ENCODE measurements at regions of chr12 and their contacts with region 1.

Region 1: DNA sequence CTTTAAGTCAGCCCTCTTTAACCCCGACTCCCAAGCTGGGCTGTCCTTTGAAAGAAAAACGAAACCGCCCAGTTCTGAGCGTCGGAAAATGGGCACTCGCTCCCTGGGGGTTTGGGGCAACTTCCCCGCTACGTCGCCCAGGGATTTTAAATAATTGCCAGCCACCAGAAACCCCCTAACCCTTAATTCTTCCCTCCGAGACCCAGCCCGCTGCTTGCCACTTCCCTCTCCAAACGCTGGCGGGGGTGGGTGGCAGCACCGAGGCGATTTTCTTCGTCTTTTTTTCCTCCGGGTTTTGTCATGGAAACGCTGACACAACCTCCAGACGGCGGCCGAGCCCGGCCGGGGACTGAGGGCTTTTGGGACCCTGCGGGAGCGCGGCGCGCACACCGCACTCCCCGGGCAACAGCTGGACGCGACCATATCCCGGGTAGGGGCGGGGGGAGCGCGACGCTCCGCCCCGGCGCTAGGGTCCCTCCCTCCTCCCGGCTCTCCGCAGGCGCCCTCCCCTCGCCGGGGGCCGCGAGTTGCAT is at the start of gene CHST11:
- DNase-seq: peak; percentile 84
- ATAC-seq: peak; percentile 75
- H3K4me3 ChIP-seq: peak within 1 kb of the TSS; percentile 76 to 99 (median 97)
- H3K4me3 Mint-ChIP-seq: peak within 1 kb of the TSS; percentile 98
- H3K27ac ChIP-seq: peak within 1 kb of the TSS; percentile 71 to 92
- H3K27ac Mint-ChIP-seq: peak within 1 kb of the TSS; percentile 94
- H3K4me1 ChIP-seq: peaks cover 28 to 36% of the 10 kb centered on the region in 2 donors
- H3K4me1 Mint-ChIP-seq: peaks cover 47% of the 10 kb centered on the region
- H3K27me3 ChIP-seq: no peaks in the 10 kb centered on the region
- H3K27me3 Mint-ChIP-seq: no peaks in the 10 kb centered on the region
- CTCF ChIP-seq: peak; percentile 28
- total RNA-seq, gene CHST11: 135 and 152 TPM in 2 replicates

Region 2: GRCh38 chr12:104022786-104023185 is 433.7 kb before region 1 on chr12:
- CTCF ChIA-PET with region 1: no interaction called
- POLR2A ChIA-PET with region 1: no interaction called
- intact Hi-C with region 1: no loop called
- DNase-seq: no peak
- ATAC-seq: no peak
- H3K4me3 ChIP-seq: no peak overlapping the region
- H3K4me3 Mint-ChIP-seq: no peak overlapping the region
- H3K27ac ChIP-seq: no peak overlapping the region
- H3K27ac Mint-ChIP-seq: no peak overlapping the region
- H3K4me1 ChIP-seq: no peaks in the 10 kb centered on the region
- H3K4me1 Mint-ChIP-seq: no peaks in the 10 kb centered on the region
- H3K27me3 ChIP-seq: peaks cover 0 to 6% (median 0%) of the 10 kb centered on the region in 4 experiments
- H3K27me3 Mint-ChIP-seq: peaks cover 29% of the 10 kb centered on the region
- CTCF ChIP-seq: no peak

Region 3: DNA sequence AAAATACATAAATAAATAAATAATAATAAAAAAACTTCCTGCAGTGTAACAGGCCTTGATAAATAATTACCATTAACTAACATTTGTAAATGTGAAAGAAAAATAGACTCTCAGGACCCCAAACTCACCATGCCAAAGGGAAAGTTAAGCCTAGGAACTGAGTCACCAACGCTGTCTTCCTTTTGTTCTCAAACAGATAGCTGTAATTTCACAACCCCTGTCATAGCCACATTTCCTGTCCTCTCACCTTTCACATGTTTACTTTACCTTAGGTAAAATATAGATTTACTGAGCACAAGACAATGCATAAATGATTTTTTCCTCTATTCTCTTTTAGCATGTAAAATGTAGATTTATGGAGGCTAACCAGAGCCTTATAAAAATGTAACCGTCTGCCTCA is 35.6 kb before region 1 on chr12:
- CTCF ChIA-PET with region 1: no interaction called
- POLR2A ChIA-PET with region 1: no interaction called
- intact Hi-C with region 1: no loop called
- DNase-seq: no peak
- ATAC-seq: no peak
- H3K4me3 ChIP-seq: no peak overlapping the region
- H3K4me3 Mint-ChIP-seq: no peak overlapping the region
- H3K27ac ChIP-seq: no peak overlapping the region
- H3K27ac Mint-ChIP-seq: no peak overlapping the region
- H3K4me1 ChIP-seq: peaks cover 6 to 9% of the 10 kb centered on the region in 2 donors
- H3K4me1 Mint-ChIP-seq: peaks cover 6% of the 10 kb centered on the region
- H3K27me3 ChIP-seq: no peaks in the 10 kb centered on the region
- H3K27me3 Mint-ChIP-seq: no peaks in the 10 kb centered on the region
- CTCF ChIP-seq: no peak

Region 4: GRCh38 chr12:104478396-104479122 is 22.1 kb after region 1 on chr12:
- CTCF ChIA-PET with region 1: interaction called, 7 read pairs
- POLR2A ChIA-PET with region 1: interaction called, 12 read pairs
- intact Hi-C with region 1: loop called (anchors 2 kb)
- DNase-seq: peak; percentile 81
- ATAC-seq: peak; percentile 84
- H3K4me3 ChIP-seq: peak overlapping the region; percentile 23 to 63 (median 45)
- H3K4me3 Mint-ChIP-seq: peak overlapping the region; percentile 95
- H3K27ac ChIP-seq: peak overlapping the region; percentile 62 to 92
- H3K27ac Mint-ChIP-seq: peak overlapping the region; percentile 95
- H3K4me1 ChIP-seq: peaks cover 71 to 83% of the 10 kb centered on the region in 2 donors
- H3K4me1 Mint-ChIP-seq: peaks cover 87% of the 10 kb centered on the region
- H3K27me3 ChIP-seq: no peaks in the 10 kb centered on the region
- H3K27me3 Mint-ChIP-seq: no peaks in the 10 kb centered on the region
- CTCF ChIP-seq: no peak

Region 5: GRCh38 chr12:104569346-104570173 is 113.1 kb after region 1 on chr12:
- CTCF ChIA-PET with region 1: interaction called, 29 read pairs
- POLR2A ChIA-PET with region 1: interaction called, 26 read pairs
- intact Hi-C with region 1: no loop called
- DNase-seq: peak; percentile 90
- ATAC-seq: peak; percentile 75
- H3K4me3 ChIP-seq: peak overlapping the region in 3 of 5 experiments; percentile 18 to 50 (median 21)
- H3K4me3 Mint-ChIP-seq: peak overlapping the region; percentile 79
- H3K27ac ChIP-seq: peak overlapping the region; percentile 70 to 87
- H3K27ac Mint-ChIP-seq: peak overlapping the region; percentile 82
- H3K4me1 ChIP-seq: peaks cover 37 to 55% of the 10 kb centered on the region in 2 donors
- H3K4me1 Mint-ChIP-seq: peaks cover 75% of the 10 kb centered on the region
- H3K27me3 ChIP-seq: no peaks in the 10 kb centered on the region
- H3K27me3 Mint-ChIP-seq: no peaks in the 10 kb centered on the region
- CTCF ChIP-seq: no peak

Region 6: GRCh38 chr12:104604070-104604994 is 147.8 kb after region 1 on chr12:
- CTCF ChIA-PET with region 1: interaction called, 12 read pairs
- POLR2A ChIA-PET with region 1: no interaction called
- intact Hi-C with region 1: no loop called
- DNase-seq: peak; percentile 82
- ATAC-seq: peak; percentile 89
- H3K4me3 ChIP-seq: peak overlapping the region in 1 of 5 experiments; percentile 21
- H3K4me3 Mint-ChIP-seq: peak overlapping the region; percentile 58
- H3K27ac ChIP-seq: peak overlapping the region; percentile 60 to 73
- H3K27ac Mint-ChIP-seq: peak overlapping the region; percentile 69
- H3K4me1 ChIP-seq: peaks cover 37 to 44% of the 10 kb centered on the region in 2 donors
- H3K4me1 Mint-ChIP-seq: peaks cover 64% of the 10 kb centered on the region
- H3K27me3 ChIP-seq: no peaks in the 10 kb centered on the region
- H3K27me3 Mint-ChIP-seq: no peaks in the 10 kb centered on the region
- CTCF ChIP-seq: no peak

Region 7: GRCh38 chr12:104720339-104721038 is 264.0 kb after region 1 on chr12:
- CTCF ChIA-PET with region 1: no interaction called
- POLR2A ChIA-PET with region 1: no interaction called
- intact Hi-C with region 1: loop called (anchors 2 kb)
- DNase-seq: peak; percentile 79
- ATAC-seq: peak; percentile 64
- H3K4me3 ChIP-seq: peak overlapping the region; percentile 20 to 52 (median 47)
- H3K4me3 Mint-ChIP-seq: peak overlapping the region; percentile 86
- H3K27ac ChIP-seq: peak overlapping the region; percentile 54 to 73
- H3K27ac Mint-ChIP-seq: peak overlapping the region; percentile 87
- H3K4me1 ChIP-seq: peaks cover 32 to 49% of the 10 kb centered on the region in 2 donors
- H3K4me1 Mint-ChIP-seq: peaks cover 64% of the 10 kb centered on the region
- H3K27me3 ChIP-seq: no peaks in the 10 kb centered on the region
- H3K27me3 Mint-ChIP-seq: no peaks in the 10 kb centered on the region
- CTCF ChIP-seq: no peak

Region 8: DNA sequence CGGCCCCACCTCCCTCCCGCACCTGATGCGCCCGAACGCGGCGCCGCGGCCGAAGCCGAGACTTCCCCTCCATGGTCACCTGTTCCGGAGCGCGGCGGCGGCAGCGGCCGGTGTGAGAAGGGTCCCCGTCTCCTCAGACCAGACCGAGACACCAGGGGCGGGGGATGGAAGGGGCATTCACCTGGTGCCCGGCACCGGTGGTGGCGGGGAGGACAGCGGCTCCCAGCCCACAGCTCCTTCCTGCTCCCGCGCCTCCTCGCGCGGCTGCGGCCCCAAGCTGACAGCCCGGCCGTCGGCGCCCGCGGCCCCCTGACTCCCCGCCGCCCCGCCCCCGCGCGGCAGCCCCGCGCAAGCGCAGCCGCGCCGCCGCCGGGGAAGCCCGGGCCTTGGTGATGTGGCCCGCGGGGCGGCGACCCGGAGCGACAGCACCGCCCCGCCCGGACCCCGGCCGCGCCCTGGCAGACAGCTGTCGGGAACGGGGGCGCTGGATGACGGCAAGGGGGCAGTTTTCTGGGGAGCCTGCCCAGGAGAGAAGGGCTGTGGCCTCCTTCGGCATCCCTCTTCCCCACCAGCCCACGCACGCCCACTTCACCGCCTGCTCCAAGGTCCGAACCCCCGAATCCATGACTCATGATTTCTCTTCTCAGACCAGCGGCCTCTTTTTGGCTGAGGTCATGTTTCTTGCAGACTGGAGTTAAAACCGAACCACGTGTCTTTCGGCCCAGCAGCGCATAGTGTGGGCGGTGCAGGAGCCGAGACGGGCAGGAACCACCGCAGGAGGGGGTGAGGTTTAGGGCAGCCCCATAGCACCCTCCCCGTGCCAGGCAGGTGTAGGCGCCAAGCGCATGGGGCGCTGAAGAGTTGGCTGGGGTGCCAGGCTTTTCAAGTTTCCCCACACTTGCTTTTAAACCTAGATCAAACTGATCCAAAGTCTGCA is 501.8 kb after region 1 on chr12 and contains the start of gene SLC41A2:
- CTCF ChIA-PET with region 1: no interaction called
- POLR2A ChIA-PET with region 1: no interaction called
- intact Hi-C with region 1: loop called (anchors 5 kb)
- DNase-seq: peak; percentile 91
- ATAC-seq: peak; percentile 84
- H3K4me3 ChIP-seq: peak within 1 kb of the TSS; percentile 57 to 80 (median 75)
- H3K4me3 Mint-ChIP-seq: peak within 1 kb of the TSS; percentile 95
- H3K27ac ChIP-seq: peak within 1 kb of the TSS; percentile 79 to 80
- H3K27ac Mint-ChIP-seq: peak within 1 kb of the TSS; percentile 93
- H3K4me1 ChIP-seq: peaks cover 13 to 16% of the 10 kb centered on the region in 2 donors
- H3K4me1 Mint-ChIP-seq: peaks cover 23% of the 10 kb centered on the region
- H3K27me3 ChIP-seq: peaks cover 0 to 2% (median 0%) of the 10 kb centered on the region in 4 experiments
- H3K27me3 Mint-ChIP-seq: peaks cover 6% of the 10 kb centered on the region
- CTCF ChIP-seq: peak; percentile 48
- total RNA-seq, gene SLC41A2: 13.0 TPM in 2 replicates

Measured in B cell (primary cell).